Heart right ventricle (tissue), 16 donors: ENCODE measurements at regions of chr12 and their contacts with region 1.

Region 1: DNA sequence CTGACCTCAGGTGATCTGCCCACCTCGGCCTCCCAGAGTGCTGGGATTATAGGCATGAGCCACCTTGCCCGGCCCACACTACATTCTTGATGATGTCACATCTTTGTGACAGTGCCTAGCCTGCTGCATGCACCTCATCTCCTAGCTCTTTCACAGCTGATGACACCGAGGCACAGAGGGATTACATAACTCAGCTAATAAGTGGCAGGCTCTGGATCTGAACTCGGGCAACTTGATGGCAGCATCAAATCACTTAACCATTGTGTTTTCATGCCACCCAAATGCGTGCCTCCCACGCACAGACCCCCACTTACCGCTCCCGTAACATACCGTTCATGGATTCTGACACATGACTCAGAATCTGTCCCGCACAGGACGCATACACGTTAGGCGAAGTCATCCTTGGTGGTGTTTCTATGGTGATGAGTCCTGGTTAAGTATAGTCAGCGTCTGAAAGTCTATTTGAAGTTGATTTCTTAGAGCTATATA is 7.4 kb downstream of the TMEM120B start:
- DNase-seq: no peak
- ATAC-seq: no peak
- H3K4me3 ChIP-seq: no peak overlapping the region
- H3K27ac ChIP-seq: no peak overlapping the region
- H3K4me1 ChIP-seq: no peaks in the 10 kb centered on the region
- H3K27me3 ChIP-seq: no peaks in the 10 kb centered on the region
- CTCF ChIP-seq: no peak

Region 2: DNA sequence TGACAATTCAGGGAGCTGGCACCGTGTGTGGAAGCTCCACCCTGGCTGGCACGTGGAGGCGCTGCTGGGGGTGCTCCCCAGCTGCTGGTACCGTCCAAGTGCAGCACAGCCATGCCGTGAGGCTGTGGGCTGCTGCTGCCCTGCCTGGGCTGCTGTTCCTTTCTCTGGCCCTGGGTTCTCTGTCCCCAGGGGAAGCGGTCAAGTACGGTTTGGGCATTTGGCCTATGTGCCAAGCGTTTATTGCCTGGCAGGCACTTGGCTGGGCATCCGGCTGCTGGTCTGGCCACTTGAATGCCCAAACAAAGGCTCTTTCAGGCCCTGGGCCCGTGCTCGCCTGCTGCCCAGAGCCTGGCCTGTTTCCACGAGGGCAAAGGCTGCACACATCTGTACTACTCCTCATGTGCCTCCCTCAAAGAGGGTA is 33.9 kb after region 1 on chr12:
- intact Hi-C with region 1: loop called in 1 of 10 experiments (anchors 5 kb)
- DNase-seq: peak; percentile 64 to 71
- ATAC-seq: peak; percentile 73 to 93 (median 90)
- H3K4me3 ChIP-seq: no peak overlapping the region
- H3K27ac ChIP-seq: peak overlapping the region in 9 of 10 donors; percentile 60 to 78 (median 67)
- H3K4me1 ChIP-seq: peaks cover 0 to 23% (median 7%) of the 10 kb centered on the region in 9 donors
- H3K27me3 ChIP-seq: no peaks in the 10 kb centered on the region
- CTCF ChIP-seq: no peak

Region 3: GRCh38 chr12:121968876-121969275 is 248.9 kb after region 1 on chr12:
- intact Hi-C with region 1: no loop called
- DNase-seq: no peak
- ATAC-seq: peak in 2 of 8 donors; percentile 43 to 49
- H3K4me3 ChIP-seq: no peak overlapping the region
- H3K27ac ChIP-seq: no peak overlapping the region
- H3K4me1 ChIP-seq: peaks cover 0 to 25% (median 12%) of the 10 kb centered on the region in 9 donors
- H3K27me3 ChIP-seq: no peaks in the 10 kb centered on the region
- CTCF ChIP-seq: no peak